Left lung (tissue), 14 donors: ENCODE measurements at regions of chr7 and their contacts with region 1.

Region 1: DNA sequence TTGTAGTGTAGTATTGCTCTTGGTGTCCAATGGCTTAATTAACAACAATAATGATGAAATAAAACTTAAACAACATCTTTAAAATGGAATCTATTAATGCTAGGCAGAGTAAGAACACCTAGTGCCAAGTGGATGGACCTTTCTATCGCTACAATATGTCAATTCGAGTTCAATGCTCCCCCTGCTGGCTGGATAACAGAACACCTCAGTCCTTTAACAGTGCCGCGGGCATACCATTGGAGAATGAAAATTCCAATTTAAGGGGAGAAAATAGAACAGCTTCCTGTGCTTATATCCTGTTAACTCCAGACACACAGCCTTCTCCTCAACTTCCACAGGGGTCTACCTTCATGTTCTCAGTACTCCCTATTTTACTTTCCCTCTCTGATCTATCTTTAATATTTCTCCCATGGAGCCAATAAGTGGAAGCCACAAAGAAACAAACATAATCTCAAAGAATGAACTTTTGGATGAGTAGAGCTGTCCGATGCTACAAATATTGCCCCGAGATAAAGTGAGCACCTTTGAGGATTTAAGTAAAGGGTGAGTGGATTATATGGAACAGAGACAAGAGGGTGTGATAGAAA is 41.4 kb downstream of the COL1A2 start:
- DNase-seq: peak in 2 of 4 donors; percentile 59 to 79
- ATAC-seq: peak; percentile 79
- H3K4me3 ChIP-seq: no peak overlapping the region
- H3K27ac ChIP-seq: no peak overlapping the region
- H3K4me1 ChIP-seq: no peaks in the 10 kb centered on the region
- H3K27me3 ChIP-seq: no peaks in the 10 kb centered on the region
- CTCF ChIP-seq: peak; percentile 69 to 73

Region 2: DNA sequence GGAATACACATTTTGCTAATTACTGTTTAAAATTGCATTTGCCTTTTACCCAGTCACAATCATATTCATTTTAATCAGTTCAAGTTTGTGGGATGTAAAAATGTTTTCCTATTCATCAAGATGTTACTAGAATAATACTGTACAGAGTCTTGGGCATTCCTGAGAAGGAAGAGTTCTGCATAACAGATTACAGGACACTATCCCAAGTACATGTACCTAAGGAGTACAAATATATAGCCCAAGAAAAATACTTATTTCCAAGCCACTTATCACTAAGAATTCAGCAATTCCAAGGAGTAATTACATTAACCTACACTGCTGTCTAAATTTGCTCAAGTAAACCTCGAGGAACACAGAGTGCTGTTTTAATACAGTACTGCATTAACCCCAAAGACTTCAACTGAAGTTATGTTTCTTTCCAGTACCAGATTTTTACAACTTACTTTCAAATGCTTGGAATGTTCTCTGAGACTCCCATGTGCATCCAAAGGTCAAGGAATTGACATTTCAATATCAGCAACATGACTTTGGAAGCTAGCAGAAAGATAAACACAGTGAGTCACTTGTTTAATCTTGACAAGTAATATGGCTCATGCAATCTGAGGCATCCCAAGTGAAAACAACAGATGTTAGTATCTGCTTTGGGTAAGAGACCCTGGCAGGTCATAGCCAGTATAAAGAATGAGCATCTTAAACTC is 306.5 kb before region 1 on chr7:
- intact Hi-C with region 1: no loop called
- DNase-seq: no peak
- ATAC-seq: no peak
- H3K4me3 ChIP-seq: no peak overlapping the region
- H3K27ac ChIP-seq: no peak overlapping the region
- H3K4me1 ChIP-seq: no peaks in the 10 kb centered on the region
- H3K27me3 ChIP-seq: no peaks in the 10 kb centered on the region
- CTCF ChIP-seq: no peak

Region 3: DNA sequence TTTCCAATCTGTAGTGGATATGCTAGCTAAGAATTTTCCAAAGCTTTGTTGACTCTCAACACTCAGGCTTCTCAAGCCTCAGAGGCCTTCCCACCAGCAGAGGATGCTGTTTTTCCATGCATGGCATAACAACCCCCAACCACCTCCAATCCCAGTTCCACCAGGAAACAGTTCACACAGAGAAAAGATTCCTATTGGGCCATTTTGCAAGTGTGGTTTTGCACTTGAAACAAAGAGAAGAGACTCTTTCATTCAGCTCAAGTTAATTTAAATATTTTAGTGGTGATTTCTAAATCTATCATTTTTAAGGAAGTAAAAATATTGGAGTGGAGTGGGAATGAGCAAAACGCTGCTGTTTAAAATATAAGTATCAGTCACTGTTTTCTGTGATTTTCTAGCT is 147.0 kb before region 1 on chr7:
- intact Hi-C with region 1: loop called in 1 of 2 experiments (anchors 5 kb)
- DNase-seq: peak in 3 of 4 donors; percentile 47 to 88 (median 63)
- ATAC-seq: peak; percentile 97
- H3K4me3 ChIP-seq: no peak overlapping the region
- H3K27ac ChIP-seq: no peak overlapping the region
- H3K4me1 ChIP-seq: no peaks in the 10 kb centered on the region
- H3K27me3 ChIP-seq: peaks cover 0 to 4% of the 10 kb centered on the region in 2 donors
- CTCF ChIP-seq: peak; percentile 44 to 70